ENCODE measurements at regions of chr14 and their contacts with region 1.

Region 1: GRCh38 chr14:102096214-102097114 is 9.6 kb upstream of the HSP90AA1 start:
- DNase-seq: peak; percentile 92
- H3K4me3 ChIP-seq: peak overlapping the region in 1 of 4 donors; percentile 11
- H3K27ac ChIP-seq: no peak overlapping the region
- H3K4me1 ChIP-seq: peaks cover 0 to 9% (median 4%) of the 10 kb centered on the region in 4 donors
- H3K27me3 ChIP-seq: no peaks in the 10 kb centered on the region
- CTCF ChIP-seq: peak; percentile 79 to 85 (median 80)
- EP300 ChIP-seq: no peak
- POLR2A ChIP-seq: no peak

Region 2: DNA sequence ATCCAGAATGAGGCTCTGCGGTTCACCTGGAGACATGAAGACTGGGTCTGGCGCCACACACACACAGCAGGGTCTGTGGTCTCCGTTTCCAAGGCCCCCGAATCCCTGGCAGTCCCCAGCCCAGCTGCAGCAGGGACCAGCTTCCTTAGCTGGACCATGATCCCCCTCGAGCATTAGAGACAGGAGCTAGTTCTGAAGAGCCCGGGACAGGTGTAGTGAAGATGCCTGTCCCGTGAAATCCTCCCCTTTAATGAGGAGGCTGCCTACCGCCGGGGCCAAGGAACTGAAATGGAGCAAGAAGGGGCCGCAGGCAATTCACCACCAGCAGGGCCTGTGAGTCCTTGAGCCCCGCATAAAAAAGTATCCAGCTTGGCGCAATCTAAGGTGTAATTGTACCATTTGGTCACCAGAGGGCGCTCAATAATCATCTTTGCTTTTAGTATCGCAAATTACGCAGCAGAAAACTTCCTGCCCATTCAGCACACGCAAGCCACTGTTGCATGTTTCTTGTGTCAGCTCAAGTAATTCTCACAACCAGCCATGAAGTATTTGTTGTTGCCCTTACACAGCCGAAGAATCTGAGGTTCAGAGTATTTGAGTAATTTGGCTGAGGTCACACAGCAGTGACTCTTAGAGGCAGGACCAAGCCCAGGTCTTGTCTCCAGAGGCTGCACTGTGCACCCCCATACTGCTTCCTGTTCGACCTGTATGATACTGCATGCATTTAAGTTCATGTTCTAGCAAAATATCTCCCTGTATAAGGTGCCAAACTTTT is 389.2 kb before region 1 on chr14:
- intact Hi-C with region 1: loop called (anchors 5 kb)
- DNase-seq: no peak
- H3K4me3 ChIP-seq: no peak overlapping the region
- H3K27ac ChIP-seq: peak overlapping the region in 2 of 4 donors; percentile 36 to 51
- H3K4me1 ChIP-seq: peaks cover 0 to 16% (median 10%) of the 10 kb centered on the region in 4 donors
- H3K27me3 ChIP-seq: peaks cover 0 to 28% (median 12%) of the 10 kb centered on the region in 3 donors
- CTCF ChIP-seq: peak; percentile 73 to 89 (median 82)
- EP300 ChIP-seq: no peak
- POLR2A ChIP-seq: no peak

Region 3: GRCh38 chr14:101964297-101965144 is 131.9 kb before region 1 on chr14 and contains the start of gene DYNC1H1:
- intact Hi-C with region 1: loop called (anchors 2 kb)
- DNase-seq: peak; percentile 99
- H3K4me3 ChIP-seq: peak within 1 kb of the TSS; percentile 89 to 100 (median 92)
- H3K27ac ChIP-seq: peak within 1 kb of the TSS; percentile 88 to 100 (median 96)
- H3K4me1 ChIP-seq: peaks cover 0 to 62% (median 43%) of the 10 kb centered on the region in 4 donors
- H3K27me3 ChIP-seq: no peaks in the 10 kb centered on the region
- CTCF ChIP-seq: no peak
- EP300 ChIP-seq: no peak
- POLR2A ChIP-seq: peak; percentile 95 to 96
- total RNA-seq, gene DYNC1H1: 320 to 592 (median 485) TPM

Region 4: DNA sequence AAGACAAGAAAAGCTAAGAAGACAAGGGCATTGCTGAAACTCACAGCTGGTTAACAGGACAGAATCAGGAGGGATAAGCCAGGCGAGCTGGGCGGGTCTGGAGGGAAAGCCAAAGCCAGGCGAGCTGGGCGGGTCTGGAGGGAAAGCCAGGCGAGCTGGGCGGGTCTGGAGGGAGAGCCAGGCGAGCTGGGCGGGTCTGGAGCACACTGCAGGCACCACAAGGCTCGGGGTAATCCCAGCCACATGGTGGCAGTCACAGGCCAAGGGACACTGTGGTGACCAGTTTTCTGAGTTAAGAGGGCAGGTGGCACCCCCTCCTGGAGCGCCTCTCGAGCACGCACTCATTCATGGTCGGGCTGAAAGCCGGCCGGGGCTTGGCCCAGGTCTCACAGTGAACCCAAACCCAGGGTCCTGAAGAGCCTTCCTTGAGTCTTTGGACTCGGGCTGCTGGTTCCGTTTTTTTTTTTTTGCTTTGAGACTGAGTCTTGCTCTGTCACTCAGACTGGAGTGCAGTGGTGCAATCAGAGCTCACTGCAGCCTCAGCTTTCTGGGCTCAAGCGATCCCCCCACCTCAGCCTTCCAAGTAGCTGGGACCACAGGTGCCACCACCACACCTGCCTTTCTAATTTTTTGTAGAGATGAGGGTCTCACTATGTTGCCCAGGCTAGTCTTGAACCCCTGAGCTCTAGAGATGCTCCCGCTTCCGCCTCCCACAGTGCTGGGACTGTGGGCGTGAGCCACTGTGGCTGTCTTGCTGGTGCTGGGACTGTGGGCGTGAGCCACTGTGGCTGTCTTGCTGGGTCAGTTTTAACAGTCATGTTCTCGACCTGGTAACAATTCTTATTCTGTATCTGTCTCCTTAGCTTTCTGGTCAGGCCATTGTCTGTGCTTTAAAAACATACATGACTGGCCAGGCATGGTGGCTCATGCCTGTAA is 49.9 kb before region 1 on chr14:
- intact Hi-C with region 1: loop called (anchors 1 kb)
- DNase-seq: peak; percentile 93
- H3K4me3 ChIP-seq: no peak overlapping the region
- H3K27ac ChIP-seq: peak overlapping the region; percentile 28 to 67 (median 39)
- H3K4me1 ChIP-seq: peaks cover 0 to 23% (median 11%) of the 10 kb centered on the region in 4 donors
- H3K27me3 ChIP-seq: no peaks in the 10 kb centered on the region
- CTCF ChIP-seq: peak in 3 of 4 experiments; percentile 35 to 50 (median 39)
- EP300 ChIP-seq: no peak
- POLR2A ChIP-seq: no peak

Region 5: GRCh38 chr14:102063091-102063802 is 33.2 kb before region 1 on chr14:
- intact Hi-C with region 1: loop called (anchors 2 kb)
- DNase-seq: peak; percentile 87
- H3K4me3 ChIP-seq: no peak overlapping the region
- H3K27ac ChIP-seq: peak overlapping the region in 2 of 4 donors; percentile 31 to 39
- H3K4me1 ChIP-seq: peaks cover 0 to 12% (median 6%) of the 10 kb centered on the region in 4 donors
- H3K27me3 ChIP-seq: no peaks in the 10 kb centered on the region
- CTCF ChIP-seq: peak in 3 of 4 experiments; percentile 7 to 36 (median 36)
- EP300 ChIP-seq: no peak
- POLR2A ChIP-seq: no peak

Region 6: GRCh38 chr14:102139248-102140026 is 43.0 kb after region 1 on chr14 and contains the start of gene WDR20:
- intact Hi-C with region 1: no loop called
- DNase-seq: peak; percentile 98
- H3K4me3 ChIP-seq: peak within 1 kb of the TSS; percentile 70 to 97 (median 96)
- H3K27ac ChIP-seq: peak within 1 kb of the TSS; percentile 77 to 86 (median 85)
- H3K4me1 ChIP-seq: peaks cover 0 to 31% (median 21%) of the 10 kb centered on the region in 4 donors
- H3K27me3 ChIP-seq: no peaks in the 10 kb centered on the region
- CTCF ChIP-seq: no peak
- EP300 ChIP-seq: peak in 1 of 4 donors; percentile 17
- POLR2A ChIP-seq: peak in 1 of 2 donors; percentile 40
- total RNA-seq, gene WDR20: 19.1 to 32.1 (median 27.3) TPM

Measured in sigmoid colon (tissue), 7 donors.